PC-9 (cell line): ENCODE measurements at regions of chr10 and their contacts with region 1.

Region 1: DNA sequence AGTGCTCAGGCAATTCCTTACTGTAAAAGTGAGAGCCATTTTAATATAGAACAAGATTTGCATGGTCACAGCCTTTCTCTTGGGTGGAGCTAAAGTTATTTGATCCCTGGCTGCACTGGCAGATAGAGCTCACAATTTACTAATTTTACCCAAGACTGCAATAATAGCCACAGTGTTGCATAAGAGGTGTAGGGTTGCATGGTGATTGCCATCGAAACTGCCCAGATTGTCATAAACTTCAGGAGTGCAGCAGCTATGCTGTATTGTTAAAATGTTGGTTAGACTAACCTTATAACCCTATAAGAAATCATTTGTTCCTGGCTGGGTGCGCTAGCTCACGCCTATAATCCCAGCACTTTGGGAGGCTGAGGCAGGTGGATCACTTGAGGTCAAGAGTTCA is 50.0 kb downstream of the VCL start:
- DNase-seq: peak; percentile 61 to 89
- H3K4me3 ChIP-seq: peak overlapping the region; percentile 29; the same call in 1 of the 2 replicates
- H3K27ac ChIP-seq: peak overlapping the region; percentile 90
- H3K4me1 ChIP-seq: peaks cover 62% of the 10 kb centered on the region
- H3K27me3 ChIP-seq: no peaks in the 10 kb centered on the region
- CTCF ChIP-seq: no peak

Region 2: GRCh38 chr10:73865459-73866442 is 182.1 kb before region 1 on chr10:
- CTCF ChIA-PET with region 1: no interaction called
- POLR2A ChIA-PET with region 1: no interaction called
- intact Hi-C with region 1: no loop called
- DNase-seq: no peak
- H3K4me3 ChIP-seq: no peak overlapping the region
- H3K27ac ChIP-seq: no peak overlapping the region
- H3K4me1 ChIP-seq: peaks cover 29% of the 10 kb centered on the region
- H3K27me3 ChIP-seq: no peaks in the 10 kb centered on the region
- CTCF ChIP-seq: no peak

Region 3: GRCh38 chr10:73979809-73980433 is 67.9 kb before region 1 on chr10:
- CTCF ChIA-PET with region 1: no interaction called
- POLR2A ChIA-PET with region 1: interaction called, 27 read pairs
- intact Hi-C with region 1: no loop called
- DNase-seq: peak in 1 of 2 experiments; percentile 38
- H3K4me3 ChIP-seq: no peak overlapping the region
- H3K27ac ChIP-seq: no peak overlapping the region
- H3K4me1 ChIP-seq: no peaks in the 10 kb centered on the region
- H3K27me3 ChIP-seq: no peaks in the 10 kb centered on the region
- CTCF ChIP-seq: no peak